ENCODE measurements at regions of chr10 and their contacts with region 1.

Region 1: GRCh38 chr10:132223156-132223590 is 36.4 kb downstream of the DPYSL4 start:
- DNase-seq: peak; percentile 80
- H3K4me3 ChIP-seq: no peak overlapping the region
- H3K27ac ChIP-seq: no peak overlapping the region
- H3K4me1 ChIP-seq: no peaks in the 10 kb centered on the region
- H3K27me3 ChIP-seq: no peaks in the 10 kb centered on the region
- CTCF ChIP-seq: peak; percentile 86

Region 2: GRCh38 chr10:132353456-132354355 is 130.5 kb after region 1 on chr10:
- intact Hi-C with region 1: loop called (anchors 2 kb)
- DNase-seq: no peak
- H3K4me3 ChIP-seq: no peak overlapping the region
- H3K27ac ChIP-seq: no peak overlapping the region
- H3K4me1 ChIP-seq: no peaks in the 10 kb centered on the region
- H3K27me3 ChIP-seq: no peaks in the 10 kb centered on the region
- CTCF ChIP-seq: no peak

Region 3: DNA sequence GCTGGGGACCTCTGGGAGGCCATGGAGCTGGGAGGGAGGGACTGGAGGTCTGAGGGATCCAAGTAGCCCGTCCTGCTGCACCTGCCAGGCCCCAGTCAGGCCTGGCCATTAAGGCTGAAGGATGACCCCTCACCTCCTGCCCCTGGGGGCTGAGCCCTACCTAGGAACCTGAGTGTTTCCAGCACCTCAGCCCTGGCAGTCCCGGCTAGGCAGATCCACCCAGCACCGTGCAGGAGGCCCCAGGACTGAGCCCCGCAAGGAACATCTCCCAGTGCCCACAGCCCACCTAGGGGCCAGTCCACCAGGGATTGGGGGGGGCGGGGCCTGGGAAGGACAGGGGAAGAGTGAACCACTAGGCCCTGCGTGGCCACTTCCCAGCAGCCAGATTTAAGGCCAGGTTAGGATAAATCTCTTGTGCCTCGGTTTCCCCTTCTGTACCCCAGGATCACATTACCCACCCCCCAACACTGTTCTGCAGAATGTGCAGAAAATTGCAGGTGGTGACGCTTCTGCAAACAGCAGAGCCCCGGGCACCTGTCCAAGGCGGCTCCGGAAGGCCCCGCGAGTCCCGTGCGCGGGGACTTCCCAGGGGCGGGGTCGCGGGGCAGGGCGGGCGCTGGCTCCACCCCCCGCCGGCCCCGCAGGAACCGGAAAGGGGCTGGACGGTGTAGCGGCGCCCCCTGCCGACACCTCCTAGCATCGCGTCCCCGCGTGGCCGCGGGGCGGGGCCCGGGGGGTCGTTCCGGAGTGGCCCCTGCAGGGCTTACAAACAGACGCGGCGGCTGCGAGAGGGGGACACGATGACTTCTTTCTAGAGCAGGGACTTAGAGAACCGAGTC is 229.7 kb after region 1 on chr10:
- intact Hi-C with region 1: loop called (anchors 2 kb)
- DNase-seq: peak; percentile 94
- H3K4me3 ChIP-seq: no peak overlapping the region
- H3K27ac ChIP-seq: peak overlapping the region; percentile 30
- H3K4me1 ChIP-seq: peaks cover 25% of the 10 kb centered on the region
- H3K27me3 ChIP-seq: no peaks in the 10 kb centered on the region
- CTCF ChIP-seq: peak; percentile 99

Region 4: GRCh38 chr10:132571650-132572535 is 348.7 kb after region 1 on chr10:
- intact Hi-C with region 1: no loop called
- DNase-seq: peak; percentile 42
- H3K4me3 ChIP-seq: no peak overlapping the region
- H3K27ac ChIP-seq: no peak overlapping the region
- H3K4me1 ChIP-seq: peaks cover 29% of the 10 kb centered on the region
- H3K27me3 ChIP-seq: no peaks in the 10 kb centered on the region
- CTCF ChIP-seq: no peak

Region 5: GRCh38 chr10:132643709-132644526 is 420.7 kb after region 1 on chr10:
- intact Hi-C with region 1: loop called (anchors 10 kb)
- DNase-seq: no peak
- H3K4me3 ChIP-seq: no peak overlapping the region
- H3K27ac ChIP-seq: no peak overlapping the region
- H3K4me1 ChIP-seq: peaks cover 6% of the 10 kb centered on the region
- H3K27me3 ChIP-seq: no peaks in the 10 kb centered on the region
- CTCF ChIP-seq: no peak